ENCODE measurements at regions of chr17 and their contacts with region 1.

Region 1: GRCh38 chr17:1736348-1737281 is 6.1 kb upstream of the SERPINF2 start:
- DNase-seq: peak; percentile 98
- ATAC-seq: peak; percentile 92
- H3K4me3 ChIP-seq: peak overlapping the region in 2 of 3 experiments; percentile 57 to 60; a peak in 3 of 6 replicates
- H3K27ac ChIP-seq: peak overlapping the region; percentile 83
- H3K4me1 ChIP-seq: peaks cover 51% of the 10 kb centered on the region
- H3K27me3 ChIP-seq: no peaks in the 10 kb centered on the region
- CTCF ChIP-seq: peak; percentile 12
- EP300 ChIP-seq: peak; percentile 92 to 99
- POLR2A ChIP-seq: peak in 1 of 2 experiments; percentile 45; a peak in 1 of 4 replicates
- RAD21 ChIP-seq: peak; percentile 44

Region 2: DNA sequence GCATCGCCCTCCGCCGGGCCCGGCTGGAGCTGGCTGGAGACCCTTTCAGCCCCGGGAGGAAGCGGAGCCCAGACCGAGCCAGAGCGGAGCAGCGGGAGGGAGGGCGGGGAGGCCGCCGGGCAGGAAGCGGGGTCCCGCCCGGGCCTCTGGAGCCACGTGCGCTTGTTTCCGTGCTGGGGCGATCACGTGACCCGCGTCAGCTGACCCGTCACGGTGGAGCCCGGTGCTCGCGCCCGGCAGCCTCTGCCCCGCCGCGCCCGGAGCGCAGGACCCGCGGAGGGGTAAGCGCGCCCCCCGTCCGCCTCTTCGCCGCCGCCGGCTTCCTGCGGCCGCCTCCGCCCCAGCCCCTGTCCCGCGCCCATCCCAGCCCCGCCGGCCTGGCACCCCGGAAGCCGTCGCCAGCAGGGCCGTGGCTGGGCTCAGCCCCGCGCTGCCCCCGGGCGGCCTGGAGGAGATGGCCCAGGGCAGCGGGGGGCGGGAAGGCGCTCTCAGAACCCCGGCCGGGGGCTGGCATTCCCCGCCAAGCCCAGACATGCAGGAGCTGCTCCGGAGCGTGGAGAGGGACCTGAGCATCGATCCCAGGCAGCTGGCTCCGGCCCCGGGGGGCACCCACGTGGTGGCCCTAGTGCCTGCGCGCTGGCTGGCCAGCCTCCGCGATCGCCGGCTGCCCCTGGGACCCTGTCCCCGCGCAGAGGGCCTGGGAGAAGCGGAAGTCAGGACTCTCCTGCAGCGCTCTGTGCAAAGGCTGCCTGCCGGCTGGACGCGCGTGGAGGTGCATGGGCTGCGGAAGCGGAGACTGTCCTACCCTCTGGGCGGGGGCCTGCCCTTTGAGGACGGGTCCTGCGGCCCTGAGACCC is 11.9 kb before region 1 on chr17 and contains the start of gene WDR81:
- CTCF ChIA-PET with region 1: no interaction called
- POLR2A ChIA-PET with region 1: interaction called, 96 read pairs
- in situ Hi-C with region 1: no loop called
- intact Hi-C with region 1: no loop called
- DNase-seq: peak; percentile 72
- ATAC-seq: peak; percentile 79
- H3K4me3 ChIP-seq: peak within 1 kb of the TSS; percentile 62 to 78 (median 64)
- H3K27ac ChIP-seq: peak within 1 kb of the TSS; percentile 77
- H3K4me1 ChIP-seq: peaks cover 72% of the 10 kb centered on the region
- H3K27me3 ChIP-seq: no peaks in the 10 kb centered on the region
- CTCF ChIP-seq: peak; percentile 32
- EP300 ChIP-seq: peak in 1 of 2 experiments; percentile 38; a peak in 1 of 4 replicates
- POLR2A ChIP-seq: peak in 1 of 2 experiments; percentile 46; a peak in 1 of 4 replicates
- RAD21 ChIP-seq: peak; percentile 42
- total RNA-seq, gene WDR81: 12.5 and 16.7 TPM in 2 replicates

Region 3: DNA sequence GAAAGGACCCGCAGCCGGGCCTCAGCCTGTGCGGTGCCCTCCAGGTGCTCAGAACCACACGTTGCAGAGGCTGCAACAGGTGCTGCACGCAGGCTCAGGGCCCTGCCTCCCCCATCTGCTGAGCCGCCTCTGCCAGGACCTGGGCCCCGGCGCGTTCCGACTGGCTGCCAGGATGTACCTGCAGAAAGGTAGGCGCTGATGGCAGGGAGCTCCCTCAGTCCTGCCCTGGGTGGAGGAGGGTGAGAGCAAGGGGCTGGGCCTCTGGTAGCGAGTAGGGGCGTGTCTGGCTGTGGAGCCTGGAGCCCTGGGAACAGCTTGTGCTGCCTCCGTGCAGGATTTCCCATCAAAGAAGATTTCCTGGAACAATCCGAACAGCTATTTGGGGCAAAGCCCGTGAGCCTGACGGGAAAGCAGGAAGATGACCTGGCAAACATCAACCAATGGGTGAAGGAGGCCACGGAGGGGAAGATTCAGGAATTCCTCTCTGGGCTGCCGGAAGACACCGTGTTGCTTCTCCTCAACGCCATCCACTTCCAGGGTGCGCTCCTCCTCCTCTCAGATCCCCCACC is 10.4 kb after region 1 on chr17:
- CTCF ChIA-PET with region 1: no interaction called
- POLR2A ChIA-PET with region 1: interaction called, 135 read pairs
- in situ Hi-C with region 1: no loop called
- intact Hi-C with region 1: no loop called
- DNase-seq: no peak
- ATAC-seq: no peak
- H3K4me3 ChIP-seq: no peak overlapping the region
- H3K27ac ChIP-seq: peak overlapping the region; percentile 11
- H3K4me1 ChIP-seq: peaks cover 60% of the 10 kb centered on the region
- H3K27me3 ChIP-seq: no peaks in the 10 kb centered on the region
- CTCF ChIP-seq: no peak
- EP300 ChIP-seq: no peak
- POLR2A ChIP-seq: peak in 1 of 2 experiments; percentile 20; a peak in 1 of 4 replicates
- RAD21 ChIP-seq: no peak

Region 4: GRCh38 chr17:1752425-1753262 is 16.0 kb after region 1 on chr17:
- CTCF ChIA-PET with region 1: no interaction called
- POLR2A ChIA-PET with region 1: interaction called, 135 read pairs
- in situ Hi-C with region 1: no loop called
- intact Hi-C with region 1: no loop called
- DNase-seq: no peak
- ATAC-seq: no peak
- H3K4me3 ChIP-seq: no peak overlapping the region
- H3K27ac ChIP-seq: peak overlapping the region; percentile 19
- H3K4me1 ChIP-seq: peaks cover 60% of the 10 kb centered on the region
- H3K27me3 ChIP-seq: no peaks in the 10 kb centered on the region
- CTCF ChIP-seq: no peak
- EP300 ChIP-seq: no peak
- POLR2A ChIP-seq: peak in 1 of 2 experiments; percentile 45; a peak in 3 of 4 replicates
- RAD21 ChIP-seq: no peak

Region 5: DNA sequence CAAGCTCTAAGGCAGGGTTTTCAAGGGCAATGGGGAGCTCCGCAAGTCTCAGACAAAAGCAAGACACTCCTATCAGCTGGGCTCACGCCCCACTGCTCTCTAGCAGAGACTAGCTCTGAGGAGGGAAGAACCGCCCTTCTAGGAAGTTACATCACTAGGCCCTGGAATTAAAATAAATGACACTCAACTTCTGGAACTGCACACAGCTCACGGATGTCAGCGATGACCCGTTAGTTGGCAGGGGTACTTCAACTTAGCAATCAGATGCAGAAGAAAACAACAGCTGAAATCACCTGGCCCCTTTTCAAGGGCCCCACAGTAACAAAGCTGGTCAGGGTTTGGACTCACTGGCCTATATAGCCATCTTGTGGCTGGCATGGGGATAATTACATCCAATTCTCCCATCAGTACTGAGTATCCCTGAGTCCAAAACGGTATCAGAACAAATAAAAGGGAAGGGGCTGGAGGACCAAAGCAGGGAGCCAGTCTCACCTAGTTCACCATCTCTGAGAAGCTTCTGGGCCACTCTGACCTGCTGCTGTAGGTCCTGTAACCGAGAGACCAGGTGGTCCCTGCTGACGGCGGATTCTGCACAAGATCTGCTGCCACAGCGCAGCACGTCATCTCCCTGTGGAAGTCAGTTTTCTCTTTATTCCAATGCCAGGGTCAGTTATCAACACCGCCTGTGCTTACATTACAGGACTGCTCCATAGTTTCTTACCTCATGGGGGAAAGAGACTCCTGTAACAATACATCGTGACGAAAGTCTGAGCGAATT is 47.4 kb after region 1 on chr17:
- CTCF ChIA-PET with region 1: no interaction called
- POLR2A ChIA-PET with region 1: interaction called, 13 read pairs
- in situ Hi-C with region 1: no loop called
- intact Hi-C with region 1: no loop called
- DNase-seq: peak; percentile 67
- ATAC-seq: peak; percentile 87
- H3K4me3 ChIP-seq: no peak overlapping the region
- H3K27ac ChIP-seq: no peak overlapping the region
- H3K4me1 ChIP-seq: peaks cover 7% of the 10 kb centered on the region
- H3K27me3 ChIP-seq: no peaks in the 10 kb centered on the region
- CTCF ChIP-seq: peak; percentile 83
- EP300 ChIP-seq: no peak
- POLR2A ChIP-seq: no peak
- RAD21 ChIP-seq: peak; percentile 84

Region 6: GRCh38 chr17:1796800-1797199 is 60.2 kb after region 1 on chr17:
- CTCF ChIA-PET with region 1: no interaction called
- POLR2A ChIA-PET with region 1: no interaction called
- in situ Hi-C with region 1: no loop called
- intact Hi-C with region 1: no loop called
- DNase-seq: no peak
- ATAC-seq: no peak
- H3K4me3 ChIP-seq: no peak overlapping the region
- H3K27ac ChIP-seq: no peak overlapping the region
- H3K4me1 ChIP-seq: peaks cover 11% of the 10 kb centered on the region
- H3K27me3 ChIP-seq: no peaks in the 10 kb centered on the region
- CTCF ChIP-seq: no peak
- EP300 ChIP-seq: no peak
- POLR2A ChIP-seq: no peak
- RAD21 ChIP-seq: no peak

Region 7: GRCh38 chr17:1810450-1811103 is 74.0 kb after region 1 on chr17:
- CTCF ChIA-PET with region 1: no interaction called
- POLR2A ChIA-PET with region 1: interaction called, 12 read pairs
- in situ Hi-C with region 1: no loop called
- intact Hi-C with region 1: no loop called
- DNase-seq: peak; percentile 87
- ATAC-seq: peak; percentile 100
- H3K4me3 ChIP-seq: peak overlapping the region in 2 of 3 experiments; percentile 0 to 57; a peak in 4 of 6 replicates
- H3K27ac ChIP-seq: peak overlapping the region; percentile 87
- H3K4me1 ChIP-seq: peaks cover 41% of the 10 kb centered on the region
- H3K27me3 ChIP-seq: no peaks in the 10 kb centered on the region
- CTCF ChIP-seq: 0 out of 2 replicates have a peak, but pooled peaks have one; percentile 6
- EP300 ChIP-seq: peak; percentile 25 to 66; a peak in 3 of 4 replicates
- POLR2A ChIP-seq: peak; percentile 80 to 89
- RAD21 ChIP-seq: peak; percentile 19